Adrenal gland (tissue), 19 donors: ENCODE measurements at regions of chr12 and their contacts with region 1.

Region 1: DNA sequence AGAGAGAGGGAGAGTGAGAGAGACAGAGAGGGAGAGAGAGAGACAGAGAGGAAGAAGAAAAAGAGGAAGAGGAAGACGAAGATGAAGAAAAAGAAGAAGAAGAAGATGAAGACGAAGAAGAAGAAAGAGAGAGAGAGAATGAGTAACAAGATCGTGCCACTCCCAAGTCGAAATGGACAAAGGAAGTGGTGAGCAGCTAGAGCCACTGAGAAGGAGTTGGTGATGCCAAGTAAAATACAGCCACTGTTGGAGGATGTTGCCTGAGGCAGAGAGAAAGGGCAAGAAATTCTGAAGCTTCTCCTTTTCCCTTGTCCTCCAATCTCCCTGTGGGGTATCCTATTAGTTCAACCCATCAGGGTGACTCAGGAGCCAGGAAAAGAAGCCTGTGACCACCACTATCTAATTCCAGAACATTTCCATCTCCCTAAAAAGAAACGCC is 12.5 kb upstream of the ANAPC5 start:
- DNase-seq: no peak
- H3K4me3 ChIP-seq: no peak overlapping the region
- H3K27ac ChIP-seq: no peak overlapping the region
- H3K4me1 ChIP-seq: no peaks in the 10 kb centered on the region
- H3K27me3 ChIP-seq: no peaks in the 10 kb centered on the region
- CTCF ChIP-seq: no peak
- POLR2A ChIP-seq: no peak

Region 2: DNA sequence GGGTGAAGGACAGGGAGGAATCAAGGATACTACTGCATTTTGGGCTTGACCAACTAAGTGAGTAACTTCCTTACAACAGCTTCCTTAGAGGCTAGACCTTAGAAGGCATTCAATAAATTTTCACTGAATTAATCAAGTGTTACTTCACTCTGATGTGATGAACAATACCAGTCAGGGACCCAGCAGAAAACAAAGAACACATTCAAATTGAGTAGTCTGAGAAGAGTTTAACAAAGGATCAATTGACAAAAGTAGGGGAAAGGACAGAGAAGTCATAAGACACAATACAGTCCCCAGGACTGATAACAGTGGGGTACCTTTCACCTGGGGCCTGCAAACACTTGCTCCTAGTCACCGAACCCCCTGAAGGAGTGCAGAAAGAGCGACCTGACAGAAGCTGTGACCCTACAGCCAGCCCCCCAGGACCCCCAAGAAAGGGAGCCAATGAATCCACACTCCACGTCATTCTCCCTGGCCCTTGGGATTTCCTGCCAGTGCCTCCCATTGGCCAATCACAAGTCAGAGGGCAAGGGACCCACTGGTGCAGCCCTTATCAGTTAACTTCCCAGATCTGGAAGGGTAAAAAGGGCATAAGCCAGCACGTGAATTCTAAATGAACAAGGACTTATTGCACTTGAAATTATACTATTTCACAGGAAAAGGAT is 19.4 kb before region 1 on chr12:
- intact Hi-C with region 1: loop called in 1 of 2 experiments (anchors 2 kb)
- DNase-seq: no peak
- H3K4me3 ChIP-seq: no peak overlapping the region
- H3K27ac ChIP-seq: no peak overlapping the region
- H3K4me1 ChIP-seq: no peaks in the 10 kb centered on the region
- H3K27me3 ChIP-seq: no peaks in the 10 kb centered on the region
- CTCF ChIP-seq: no peak
- POLR2A ChIP-seq: no peak